ENCODE measurements at regions of chr11 and their contacts with region 1.

Region 1: DNA sequence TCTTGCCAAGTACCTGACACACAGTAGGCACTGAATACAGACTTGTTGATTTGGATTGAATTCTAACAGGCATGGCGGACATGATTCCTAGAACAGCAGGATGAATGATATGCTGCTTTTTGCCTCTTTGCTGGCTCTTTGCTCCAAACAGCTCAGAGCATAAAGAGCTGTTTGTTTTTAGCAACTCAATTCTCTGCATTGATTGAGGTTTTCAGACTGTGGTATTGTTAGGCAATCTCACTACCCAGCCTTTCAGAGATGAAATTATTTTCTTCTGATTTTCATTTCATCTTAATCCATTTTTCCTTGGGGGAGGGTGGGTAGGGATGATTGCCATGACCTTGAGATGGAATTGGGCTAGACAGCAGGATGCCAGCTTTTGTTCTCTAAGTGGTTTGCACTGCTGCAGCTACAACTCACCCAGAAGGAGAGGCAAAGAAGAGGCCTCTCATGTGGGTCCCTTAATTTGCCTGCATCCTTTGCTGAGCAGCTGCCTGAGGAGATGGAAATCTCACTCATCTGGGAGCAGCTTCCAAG is 20.5 kb downstream of the COA4 start:
- DNase-seq: no peak
- ATAC-seq: peak in 3 of 4 donors; percentile 12 to 49 (median 31)
- H3K4me3 ChIP-seq: no peak overlapping the region
- H3K27ac ChIP-seq: peak overlapping the region in 8 of 12 donors; percentile 13 to 59 (median 46)
- H3K4me1 ChIP-seq: peaks cover 0 to 23% (median 4%) of the 10 kb centered on the region in 12 donors
- H3K27me3 ChIP-seq: no peaks in the 10 kb centered on the region
- CTCF ChIP-seq: no peak
- POLR2A ChIP-seq: no peak

Region 2: GRCh38 chr11:74011360-74012073 is 155.4 kb after region 1 on chr11:
- intact Hi-C with region 1: loop called in 1 of 10 experiments (anchors 10 kb)
- DNase-seq: no peak
- ATAC-seq: peak in 3 of 4 donors; percentile 21 to 53 (median 43)
- H3K4me3 ChIP-seq: no peak overlapping the region
- H3K27ac ChIP-seq: peak overlapping the region in 2 of 12 donors; percentile 29 to 34
- H3K4me1 ChIP-seq: peaks cover 0 to 61% (median 14%) of the 10 kb centered on the region in 12 donors
- H3K27me3 ChIP-seq: no peaks in the 10 kb centered on the region
- CTCF ChIP-seq: no peak
- POLR2A ChIP-seq: no peak

Measured in heart left ventricle (tissue), 16 donors.